Heart right ventricle (tissue), 16 donors: ENCODE measurements at regions of chr6 and their contacts with region 1.

Region 1: DNA sequence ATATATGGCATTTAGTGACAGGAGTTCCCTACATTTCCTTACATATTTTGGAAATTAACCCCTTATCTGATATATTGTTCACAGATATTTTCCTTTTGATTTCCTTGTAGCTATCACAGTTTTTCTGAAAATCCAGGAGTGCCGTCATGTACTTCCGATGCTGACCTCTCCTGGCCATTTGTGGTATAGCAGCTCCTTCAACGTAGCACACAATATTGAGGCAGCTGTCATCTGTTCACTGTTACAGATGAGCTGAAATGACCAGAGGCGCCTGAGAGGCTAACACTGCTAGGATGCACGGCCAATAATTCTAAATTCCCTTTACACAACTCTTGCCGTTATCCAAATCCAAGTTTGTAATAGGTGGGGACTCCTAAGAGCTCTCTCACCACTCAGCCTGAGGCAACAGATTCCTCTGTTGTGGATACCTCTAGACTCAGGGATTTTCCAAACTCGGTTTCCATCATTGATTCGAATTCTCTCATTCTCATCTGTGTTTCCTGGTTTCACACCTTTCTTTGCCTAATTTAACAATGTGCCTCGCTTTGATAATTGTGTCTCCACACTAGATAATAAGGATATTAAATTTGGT is 53.0 kb downstream of the MMUT start:
- DNase-seq: peak in 1 of 2 donors; percentile 58
- ATAC-seq: peak in 2 of 8 donors; percentile 69
- H3K4me3 ChIP-seq: no peak overlapping the region
- H3K27ac ChIP-seq: no peak overlapping the region
- H3K4me1 ChIP-seq: peaks cover 0 to 5% (median 0%) of the 10 kb centered on the region in 9 donors
- H3K27me3 ChIP-seq: no peaks in the 10 kb centered on the region
- CTCF ChIP-seq: peak; percentile 53 to 89 (median 84)

Region 2: DNA sequence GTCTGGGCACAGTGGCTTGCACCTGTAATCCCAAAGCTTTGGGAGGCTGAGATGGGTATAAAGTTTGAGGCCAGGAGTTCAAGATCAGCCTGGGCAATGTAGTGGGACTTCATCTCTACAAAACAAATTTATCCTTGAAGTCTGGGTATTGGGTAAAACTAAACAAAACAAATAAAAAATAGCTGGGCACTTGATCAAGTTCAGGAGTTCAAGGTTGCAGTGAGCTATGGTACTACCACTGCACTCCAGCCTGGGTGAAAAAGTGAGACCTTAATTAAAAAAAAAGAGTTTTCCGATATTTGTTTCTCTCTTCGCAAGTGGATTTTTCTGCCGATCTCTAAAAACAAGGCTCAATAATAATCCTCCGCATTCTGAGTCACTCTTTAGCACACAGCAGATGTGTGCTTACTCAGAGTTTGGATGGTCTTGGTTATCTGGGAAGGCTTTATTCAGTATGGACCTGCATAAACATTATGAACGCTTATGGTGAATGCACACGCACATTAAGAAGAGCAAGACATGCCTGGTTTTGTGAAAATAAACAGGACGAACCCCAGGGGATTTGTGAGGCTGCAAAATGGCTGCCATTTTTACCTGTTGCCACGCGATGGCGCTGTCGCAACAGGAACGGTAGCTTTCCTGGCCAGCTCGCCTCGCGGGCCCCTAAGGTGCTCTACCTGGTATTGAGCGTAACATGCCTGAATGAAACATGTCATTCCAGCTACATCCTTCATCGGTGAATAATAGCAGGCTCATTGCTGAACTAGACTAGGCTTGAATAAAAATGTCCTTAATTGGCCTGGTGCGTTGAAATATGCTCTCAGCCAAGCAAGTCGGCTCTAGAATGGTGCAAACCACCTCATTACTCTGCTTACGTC is 1622.2 kb before region 1 on chr6:
- intact Hi-C with region 1: loop called in 9 of 10 experiments (anchors 5 to 10 kb)
- DNase-seq: peak; percentile 29 to 54
- ATAC-seq: peak in 7 of 8 donors; percentile 58 to 78 (median 71)
- H3K4me3 ChIP-seq: peak overlapping the region in 2 of 10 donors; percentile 5 to 32
- H3K27ac ChIP-seq: no peak overlapping the region
- H3K4me1 ChIP-seq: peaks cover 0 to 11% (median 3%) of the 10 kb centered on the region in 9 donors
- H3K27me3 ChIP-seq: peaks cover 0 to 33% (median 13%) of the 10 kb centered on the region in 7 donors
- CTCF ChIP-seq: peak; percentile 74 to 95 (median 92)